Posterior cingulate gyrus (tissue), 11 donors: ENCODE measurements at regions of chr16 and their contacts with region 1.

Region 1: DNA sequence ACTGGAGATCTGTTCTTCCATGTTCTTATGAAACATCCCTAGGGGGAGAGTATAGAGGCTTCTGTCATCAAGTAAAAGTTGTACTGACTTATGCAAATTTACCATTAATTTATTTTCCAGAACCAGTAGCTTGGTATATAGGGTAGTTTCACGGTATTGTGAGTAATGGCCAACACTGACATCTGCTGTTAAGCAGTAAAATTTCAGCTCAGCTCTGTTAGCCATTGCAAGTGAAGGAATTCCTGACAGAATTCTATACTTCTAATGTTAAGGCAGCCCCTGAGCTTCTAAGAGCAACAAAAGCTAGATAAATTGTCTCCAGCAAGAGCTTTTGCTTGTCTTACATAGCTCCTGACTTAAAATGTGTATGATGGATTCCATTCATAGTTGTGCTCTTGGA is 613.5 kb upstream of the C16orf82 start:
- DNase-seq: no peak

Region 2: DNA sequence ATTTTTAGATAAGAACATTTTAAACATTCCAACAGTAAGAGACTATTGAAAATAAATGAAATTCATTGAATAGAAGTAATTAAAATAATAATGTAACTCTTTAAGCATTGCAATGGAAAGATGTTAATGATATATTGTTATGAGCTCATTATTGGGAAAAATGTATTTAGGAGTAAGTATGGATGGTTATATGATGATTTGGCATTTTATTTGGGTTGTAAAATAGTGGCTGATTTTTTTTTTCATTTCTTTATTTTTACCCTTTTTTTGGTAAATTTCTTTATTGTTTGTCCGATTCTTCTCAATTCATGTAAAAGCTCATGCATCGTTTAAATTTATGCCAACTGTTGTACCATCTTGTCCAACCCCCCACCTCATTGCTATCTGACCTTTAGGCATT is 221.6 kb before region 1 on chr16:
- intact Hi-C with region 1: no loop called
- DNase-seq: no peak

Region 3: GRCh38 chr16:26325451-26325850 is 127.8 kb before region 1 on chr16:
- intact Hi-C with region 1: loop called (anchors 10 kb)
- DNase-seq: no peak